Activated CD4-positive, alpha-beta T cell treated with anti-CD3 and anti-CD28 coated beads, Interleukin-2, amount 10 ng/mL, durations not matched to agents 7 days and 5 days (primary cell): ENCODE measurements at regions of chr5 and their contacts with region 1.

Region 1: DNA sequence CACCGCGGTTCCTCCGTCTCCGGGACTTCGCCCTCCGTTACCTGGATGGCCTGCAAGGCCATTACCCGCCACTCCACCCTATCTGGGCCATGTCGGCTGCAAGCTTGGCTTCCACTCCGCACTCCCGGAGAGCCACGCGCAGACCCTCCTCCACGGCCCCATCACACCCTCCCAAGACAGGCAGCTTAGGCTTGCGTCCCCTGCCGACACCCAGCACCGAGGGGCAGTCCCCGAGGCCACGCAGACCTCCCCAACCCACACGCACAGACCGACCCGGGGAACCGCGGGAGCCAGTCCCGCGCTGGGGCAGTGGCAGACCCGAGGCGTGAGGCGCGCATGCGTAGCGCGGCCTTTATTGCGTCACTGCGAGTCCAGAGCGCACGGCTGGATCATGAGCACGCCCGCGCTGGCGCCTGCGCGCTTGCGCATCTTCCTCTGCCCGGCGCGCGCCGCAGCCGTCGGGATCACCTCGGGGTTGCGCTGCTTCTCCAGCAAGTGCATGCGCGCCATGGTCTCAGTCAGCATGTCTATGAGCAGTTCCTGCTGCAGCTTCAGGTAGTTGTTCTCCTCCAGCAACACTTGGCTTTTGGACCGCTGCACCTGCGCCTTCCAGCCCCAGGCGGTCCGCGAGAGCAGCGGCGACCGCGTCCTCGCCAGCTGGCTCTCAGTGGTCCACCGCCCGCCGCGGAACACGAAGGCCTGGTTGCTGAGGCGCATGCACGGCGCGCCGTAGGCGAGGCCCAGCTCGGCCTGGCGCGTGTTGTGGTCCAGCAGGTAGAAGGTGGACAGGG is 2.4 kb downstream of the CBY3 start:
- DNase-seq: peak; percentile 94
- H3K4me3 Mint-ChIP-seq: peak overlapping the region; percentile 99
- H3K27ac Mint-ChIP-seq: peak overlapping the region; percentile 99
- H3K4me1 Mint-ChIP-seq: peaks cover 33% of the 10 kb centered on the region
- H3K27me3 Mint-ChIP-seq: no peaks in the 10 kb centered on the region

Region 2: DNA sequence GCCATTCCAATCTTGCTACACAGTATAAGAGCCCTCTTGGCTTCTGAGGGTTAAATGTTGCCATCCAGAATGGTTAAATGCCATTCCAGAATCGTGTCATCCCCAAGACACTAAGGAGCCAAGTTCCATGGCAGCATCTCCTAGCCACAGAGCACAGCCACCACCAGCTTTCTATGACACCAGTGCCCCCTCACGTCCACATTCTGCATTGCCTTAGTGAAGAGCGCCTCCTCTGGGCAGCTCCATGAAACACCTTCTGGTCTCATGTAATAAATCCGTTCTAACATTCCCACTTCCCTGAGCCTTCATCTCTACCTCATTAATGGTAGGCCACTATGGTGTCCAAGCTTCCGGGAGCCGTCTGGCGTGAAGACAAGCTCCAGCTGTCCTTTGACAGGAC is 10.0 kb before region 1 on chr5:
- CTCF ChIA-PET with region 1: interaction called, 24 read pairs
- POLR2A ChIA-PET with region 1: no interaction called
- DNase-seq: peak; percentile 34
- H3K4me3 Mint-ChIP-seq: no peak overlapping the region
- H3K27ac Mint-ChIP-seq: no peak overlapping the region
- H3K4me1 Mint-ChIP-seq: peaks cover 4% of the 10 kb centered on the region
- H3K27me3 Mint-ChIP-seq: no peaks in the 10 kb centered on the region

Region 3: DNA sequence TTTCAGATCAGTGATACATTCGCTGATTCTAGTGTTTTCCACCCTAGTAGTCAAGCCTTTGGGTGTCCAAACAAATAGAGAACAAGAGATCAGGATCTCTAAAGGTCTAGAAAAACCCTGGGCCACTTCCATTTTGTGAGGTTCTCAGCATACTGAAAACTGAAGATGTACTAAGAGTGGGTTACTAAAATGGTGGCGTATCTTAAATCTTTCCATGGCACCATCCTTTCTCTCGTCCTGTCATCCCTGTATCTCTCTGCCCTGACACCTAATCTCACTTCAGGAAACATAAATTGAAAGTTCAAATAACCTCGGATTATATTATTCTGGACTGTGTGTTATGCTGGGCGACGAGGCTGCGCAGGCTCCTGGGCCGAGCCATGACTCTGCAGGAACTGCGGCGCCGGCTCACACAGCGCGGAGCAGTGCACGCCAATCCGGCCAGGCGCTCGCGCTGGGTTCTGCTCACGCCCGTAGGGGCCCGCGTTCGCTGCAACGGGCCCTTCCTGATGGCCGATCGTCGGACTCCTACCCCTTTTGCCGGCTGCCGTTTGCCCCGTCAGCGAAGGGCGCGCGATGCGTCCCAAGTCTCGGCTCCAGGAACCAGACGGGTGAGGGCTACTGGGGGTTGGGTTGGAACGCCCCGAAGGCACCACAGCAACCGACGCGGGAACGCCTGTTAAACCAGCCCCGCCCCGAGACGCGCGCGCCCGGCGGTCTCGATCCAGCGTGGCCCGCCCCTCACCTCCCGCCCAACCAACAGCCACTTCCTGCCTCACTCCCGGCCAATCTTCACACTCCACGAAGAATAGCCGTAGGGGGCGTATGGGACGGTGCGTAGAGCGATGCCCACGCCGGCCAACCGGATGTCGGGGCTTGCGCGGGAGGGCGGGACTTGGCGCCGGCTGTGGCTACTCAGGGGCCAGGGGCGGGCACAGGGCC is 19.8 kb after region 1 on chr5:
- CTCF ChIA-PET with region 1: interaction called, 31 read pairs
- POLR2A ChIA-PET with region 1: interaction called, 4 read pairs
- DNase-seq: peak; percentile 99
- H3K4me3 Mint-ChIP-seq: peak overlapping the region; percentile 99
- H3K27ac Mint-ChIP-seq: peak overlapping the region; percentile 100
- H3K4me1 Mint-ChIP-seq: peaks cover 45% of the 10 kb centered on the region
- H3K27me3 Mint-ChIP-seq: no peaks in the 10 kb centered on the region